ENCODE measurements at regions of chr1 and their contacts with region 1.

Region 1: DNA sequence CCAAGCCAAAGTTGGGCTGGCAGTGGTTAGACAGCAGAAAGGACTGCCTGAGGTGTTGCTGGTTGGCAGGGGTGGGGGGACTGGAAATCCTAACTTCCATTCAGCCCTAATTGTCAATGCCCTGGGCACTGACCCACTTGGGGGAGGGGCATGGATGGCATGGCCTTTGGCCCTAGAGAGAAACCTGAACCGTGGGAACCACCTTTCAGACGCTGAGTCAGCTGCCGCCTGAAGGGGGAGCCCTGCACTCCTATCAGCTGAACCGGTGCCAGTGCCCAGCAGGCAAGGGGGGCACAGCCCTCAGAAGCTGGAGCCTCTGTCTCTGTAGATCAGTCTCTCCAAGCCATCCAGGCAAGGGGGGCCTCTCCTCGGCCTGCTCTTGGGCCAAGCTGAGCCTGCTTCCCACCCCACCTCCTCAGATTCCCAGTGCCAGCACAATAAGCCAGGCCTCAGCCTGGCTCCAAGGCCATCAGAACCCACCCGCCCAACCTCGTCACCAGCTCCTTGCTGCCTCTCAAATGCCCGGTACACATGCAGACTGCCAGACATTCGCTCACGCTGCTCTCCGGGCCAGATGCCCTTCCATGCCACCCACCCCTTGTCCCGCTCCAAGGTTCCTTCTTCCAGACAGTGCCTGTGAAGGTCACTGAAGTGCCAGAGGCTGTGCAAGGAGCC is 11.5 kb downstream of the TINAGL1 start:
- DNase-seq: peak; percentile 85
- ATAC-seq: peak; percentile 79
- H3K4me3 Mint-ChIP-seq: peak overlapping the region; percentile 45
- H3K27ac Mint-ChIP-seq: no peak overlapping the region; the same call in 1 of the 2 replicates
- H3K4me1 Mint-ChIP-seq: peaks cover 20% of the 10 kb centered on the region
- H3K27me3 Mint-ChIP-seq: peaks cover 23% of the 10 kb centered on the region
- CTCF ChIP-seq: no peak; the same call in 1 of the 2 replicates

Region 2: DNA sequence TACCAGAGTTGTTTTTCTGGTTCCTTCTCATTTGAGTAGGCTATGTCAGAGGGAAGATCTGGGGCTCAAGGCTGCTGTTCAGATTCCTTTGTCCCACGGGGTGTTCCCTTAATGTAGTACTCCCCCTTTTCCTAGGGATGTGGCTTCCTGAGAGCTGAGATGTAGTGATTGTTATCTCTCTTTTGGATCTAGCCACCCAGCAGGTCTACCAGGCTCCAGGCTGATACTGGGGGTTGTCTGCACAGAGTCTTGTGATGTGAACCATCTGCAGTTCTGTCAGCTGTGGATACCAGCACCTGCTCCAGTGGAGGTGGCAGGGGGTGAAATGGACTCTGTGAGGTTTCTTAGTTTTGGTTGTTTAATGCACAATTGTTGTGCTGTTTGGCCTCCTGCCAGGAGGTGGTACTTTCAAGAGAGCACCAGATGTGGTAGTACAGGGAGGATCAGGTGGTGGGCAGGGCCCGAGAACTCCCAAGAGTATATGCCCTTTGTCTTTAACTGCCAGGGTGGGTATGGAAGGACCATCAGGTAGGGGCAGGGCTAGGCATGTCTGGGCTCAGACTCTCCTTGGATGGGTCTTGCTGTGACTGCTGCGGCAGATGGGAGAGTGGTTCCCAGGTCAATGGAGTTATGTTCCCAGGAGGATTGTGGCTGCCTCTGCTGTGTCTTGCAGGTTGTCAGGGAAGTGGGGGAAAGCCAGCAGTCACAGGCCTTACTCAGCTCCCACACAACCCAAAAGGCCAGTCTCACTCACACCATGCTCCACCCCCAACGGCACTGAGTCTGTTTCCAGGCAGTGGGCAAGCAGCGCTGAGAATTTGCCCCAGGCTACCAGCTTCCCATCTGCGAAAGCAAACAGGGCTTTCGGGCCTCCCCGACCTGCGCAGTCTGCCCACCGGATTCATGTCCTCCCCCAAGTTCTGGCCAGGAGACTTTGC is 110.7 kb before region 1 on chr1:
- CTCF ChIA-PET with region 1: no interaction called
- POLR2A ChIA-PET with region 1: no interaction called
- DNase-seq: no peak
- ATAC-seq: no peak; the same call in 1 of the 2 replicates
- H3K4me3 Mint-ChIP-seq: no peak overlapping the region
- H3K27ac Mint-ChIP-seq: no peak overlapping the region
- H3K4me1 Mint-ChIP-seq: peaks cover 14% of the 10 kb centered on the region
- H3K27me3 Mint-ChIP-seq: peaks cover 3% of the 10 kb centered on the region; the same call in 1 of the 2 replicates
- CTCF ChIP-seq: no peak

Region 3: GRCh38 chr1:31501215-31501904 is 86.5 kb before region 1 on chr1:
- CTCF ChIA-PET with region 1: no interaction called
- POLR2A ChIA-PET with region 1: no interaction called
- DNase-seq: no peak
- ATAC-seq: peak; percentile 50
- H3K4me3 Mint-ChIP-seq: no peak overlapping the region
- H3K27ac Mint-ChIP-seq: no peak overlapping the region
- H3K4me1 Mint-ChIP-seq: peaks cover 38% of the 10 kb centered on the region
- H3K27me3 Mint-ChIP-seq: peaks cover 4% of the 10 kb centered on the region; the same call in 1 of the 2 replicates
- CTCF ChIP-seq: no peak

Region 4: DNA sequence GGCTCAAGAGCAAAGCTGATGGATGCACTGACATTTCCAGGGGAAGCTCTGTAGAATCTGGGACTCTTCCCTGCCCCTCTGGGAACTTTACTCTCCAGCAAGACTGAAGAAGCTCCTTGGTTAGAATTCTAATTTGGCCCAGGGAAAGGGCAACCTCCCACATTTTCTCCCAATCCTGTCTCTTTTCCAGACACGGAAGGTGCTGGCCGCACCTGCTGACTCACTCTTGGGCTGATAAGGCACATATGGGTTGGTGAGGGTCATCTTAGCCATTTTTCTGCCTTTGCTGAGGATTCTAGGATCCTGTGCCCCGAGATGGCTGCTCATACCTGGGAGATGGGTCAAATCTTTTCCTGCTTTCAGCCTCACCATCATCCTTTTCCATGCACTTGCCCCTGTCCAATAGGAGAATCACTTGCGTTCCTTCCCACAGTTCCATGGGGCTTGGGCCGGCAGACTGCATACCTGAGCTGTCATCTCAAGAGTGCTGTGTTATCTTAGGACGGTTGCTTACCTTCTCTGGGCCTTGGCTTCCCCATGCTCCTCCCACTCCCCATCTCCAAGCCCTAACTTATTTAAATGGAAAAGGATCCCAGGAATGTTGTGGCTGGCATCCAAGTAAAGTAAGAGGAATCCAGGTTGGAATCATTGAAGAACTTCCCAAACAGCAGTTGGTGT is 10.2 kb before region 1 on chr1:
- CTCF ChIA-PET with region 1: interaction called, 15 read pairs
- POLR2A ChIA-PET with region 1: no interaction called
- DNase-seq: no peak
- ATAC-seq: no peak
- H3K4me3 Mint-ChIP-seq: peak overlapping the region; percentile 35
- H3K27ac Mint-ChIP-seq: no peak overlapping the region
- H3K4me1 Mint-ChIP-seq: peaks cover 32% of the 10 kb centered on the region
- H3K27me3 Mint-ChIP-seq: no peaks in the 10 kb centered on the region; the same call in 1 of the 2 replicates
- CTCF ChIP-seq: no peak

Region 5: DNA sequence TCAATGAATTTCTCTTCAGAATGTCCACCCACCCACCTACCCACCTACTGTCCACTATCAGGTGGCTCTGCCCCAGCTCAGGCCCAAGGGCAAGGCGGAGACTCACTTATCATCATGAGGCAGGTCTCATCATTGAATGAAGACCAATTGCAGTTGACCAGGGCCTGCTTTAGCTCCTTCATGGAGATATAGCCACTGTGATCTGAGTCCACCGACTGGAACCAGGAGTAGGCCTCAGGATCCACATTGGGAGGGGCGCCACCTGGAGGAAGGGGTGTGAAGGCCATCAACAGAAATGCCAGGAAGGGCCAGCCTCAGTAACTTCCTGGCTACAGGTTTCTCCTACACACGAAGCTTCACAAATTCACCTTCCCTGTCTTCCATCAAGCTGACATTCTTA is 45.2 kb after region 1 on chr1:
- CTCF ChIA-PET with region 1: interaction called, 10 read pairs
- POLR2A ChIA-PET with region 1: no interaction called
- DNase-seq: peak; percentile 75
- ATAC-seq: peak; percentile 86
- H3K4me3 Mint-ChIP-seq: no peak overlapping the region
- H3K27ac Mint-ChIP-seq: peak overlapping the region; percentile 76; the same call in 1 of the 2 replicates
- H3K4me1 Mint-ChIP-seq: no peaks in the 10 kb centered on the region
- H3K27me3 Mint-ChIP-seq: no peaks in the 10 kb centered on the region
- CTCF ChIP-seq: peak; percentile 54; the same call in 1 of the 2 replicates

Measured in WTC11 (cell line).